ENCODE measurements at regions of chr1 and their contacts with region 1.

Region 1: GRCh38 chr1:47192458-47193384 is 2.9 kb upstream of the PDZK1IP1 start:
- DNase-seq: peak; percentile 24 to 77 (median 62)
- ATAC-seq: peak; percentile 62
- H3K4me3 ChIP-seq: no peak overlapping the region
- H3K4me3 Mint-ChIP-seq: no peak overlapping the region
- H3K27ac ChIP-seq: no peak overlapping the region
- H3K27ac Mint-ChIP-seq: no peak overlapping the region
- H3K4me1 ChIP-seq: no peaks in the 10 kb centered on the region
- H3K4me1 Mint-ChIP-seq: peaks cover 4% of the 10 kb centered on the region
- H3K27me3 ChIP-seq: no peaks in the 10 kb centered on the region
- H3K27me3 Mint-ChIP-seq: peaks cover 7% of the 10 kb centered on the region
- CTCF ChIP-seq: peak; percentile 95

Region 2: DNA sequence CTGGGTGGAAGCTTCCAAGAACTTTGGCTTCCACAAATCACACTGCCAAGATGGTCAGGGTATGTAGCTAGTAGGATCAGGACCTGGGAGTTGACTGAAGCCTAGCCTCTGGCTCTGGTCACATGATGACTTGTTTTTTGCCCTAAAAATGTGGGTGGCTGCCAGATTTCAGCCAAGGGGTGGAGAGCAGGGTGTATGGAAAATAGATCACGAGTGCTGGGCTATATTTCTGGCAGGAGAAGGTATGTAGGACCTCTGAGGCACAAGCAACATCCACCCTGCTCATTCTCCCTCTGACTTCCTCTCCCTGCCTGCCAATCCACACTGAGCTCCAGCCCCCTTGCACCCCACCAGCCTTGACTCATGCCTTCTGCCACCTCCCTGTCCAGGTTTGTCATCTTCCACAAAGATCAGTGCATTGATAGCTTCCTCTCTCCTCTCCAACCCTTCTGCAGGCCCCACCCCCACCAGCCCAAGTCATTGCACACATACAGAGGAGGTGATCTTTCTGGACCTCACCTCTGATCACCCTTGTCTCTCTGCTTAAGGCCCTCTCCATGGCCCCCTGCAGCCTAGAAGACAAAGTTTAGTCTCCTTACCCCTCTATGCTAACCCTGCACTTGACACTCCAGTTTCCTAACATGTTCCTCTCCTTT is 402.1 kb before region 1 on chr1:
- CTCF ChIA-PET with region 1: no interaction called
- POLR2A ChIA-PET with region 1: no interaction called
- intact Hi-C with region 1: no loop called
- DNase-seq: no peak
- ATAC-seq: no peak
- H3K4me3 ChIP-seq: no peak overlapping the region
- H3K4me3 Mint-ChIP-seq: no peak overlapping the region
- H3K27ac ChIP-seq: no peak overlapping the region
- H3K27ac Mint-ChIP-seq: no peak overlapping the region
- H3K4me1 ChIP-seq: no peaks in the 10 kb centered on the region
- H3K4me1 Mint-ChIP-seq: no peaks in the 10 kb centered on the region
- H3K27me3 ChIP-seq: peaks cover 0 to 3% of the 10 kb centered on the region in 2 experiments
- H3K27me3 Mint-ChIP-seq: peaks cover 25% of the 10 kb centered on the region
- CTCF ChIP-seq: no peak

Region 3: GRCh38 chr1:47179017-47179987 is 13.4 kb before region 1 on chr1:
- CTCF ChIA-PET with region 1: interaction called, 35 read pairs
- POLR2A ChIA-PET with region 1: no interaction called
- intact Hi-C with region 1: no loop called
- DNase-seq: peak; percentile 33 to 75 (median 59)
- ATAC-seq: peak; percentile 69
- H3K4me3 ChIP-seq: peak overlapping the region; percentile 18 to 34
- H3K4me3 Mint-ChIP-seq: peak overlapping the region; percentile 72
- H3K27ac ChIP-seq: no peak overlapping the region
- H3K27ac Mint-ChIP-seq: no peak overlapping the region
- H3K4me1 ChIP-seq: peaks cover 7% of the 10 kb centered on the region
- H3K4me1 Mint-ChIP-seq: peaks cover 14% of the 10 kb centered on the region
- H3K27me3 ChIP-seq: peaks cover 0 to 10% of the 10 kb centered on the region in 2 experiments
- H3K27me3 Mint-ChIP-seq: peaks cover 33% of the 10 kb centered on the region
- CTCF ChIP-seq: peak; percentile 79

Region 4: GRCh38 chr1:47219590-47220220 is 27.0 kb after region 1 on chr1:
- CTCF ChIA-PET with region 1: interaction called, 10 read pairs
- POLR2A ChIA-PET with region 1: no interaction called
- intact Hi-C with region 1: no loop called
- DNase-seq: no peak
- ATAC-seq: no peak
- H3K4me3 ChIP-seq: no peak overlapping the region
- H3K4me3 Mint-ChIP-seq: no peak overlapping the region
- H3K27ac ChIP-seq: no peak overlapping the region
- H3K27ac Mint-ChIP-seq: no peak overlapping the region
- H3K4me1 ChIP-seq: no peaks in the 10 kb centered on the region
- H3K4me1 Mint-ChIP-seq: no peaks in the 10 kb centered on the region
- H3K27me3 ChIP-seq: peaks cover 0 to 8% of the 10 kb centered on the region in 2 experiments
- H3K27me3 Mint-ChIP-seq: peaks cover 16% of the 10 kb centered on the region
- CTCF ChIP-seq: no peak

Region 5: GRCh38 chr1:47424336-47424982 is 231.7 kb after region 1 on chr1:
- CTCF ChIA-PET with region 1: interaction called, 5 read pairs
- POLR2A ChIA-PET with region 1: no interaction called
- intact Hi-C with region 1: loop called in 1 of 2 experiments (anchors 10 kb)
- DNase-seq: peak in 1 of 9 experiments; percentile 26
- ATAC-seq: no peak
- H3K4me3 ChIP-seq: no peak overlapping the region
- H3K4me3 Mint-ChIP-seq: no peak overlapping the region
- H3K27ac ChIP-seq: no peak overlapping the region
- H3K27ac Mint-ChIP-seq: no peak overlapping the region
- H3K4me1 ChIP-seq: no peaks in the 10 kb centered on the region
- H3K4me1 Mint-ChIP-seq: peaks cover 2% of the 10 kb centered on the region
- H3K27me3 ChIP-seq: peaks cover 0 to 10% of the 10 kb centered on the region in 2 experiments
- H3K27me3 Mint-ChIP-seq: peaks cover 28% of the 10 kb centered on the region
- CTCF ChIP-seq: peak; percentile 26

Region 6: GRCh38 chr1:47725992-47726855 is 533.5 kb after region 1 on chr1:
- CTCF ChIA-PET with region 1: interaction called, 6 read pairs
- POLR2A ChIA-PET with region 1: no interaction called
- intact Hi-C with region 1: loop called (anchors 1 to 5 kb)
- DNase-seq: peak; percentile 24 to 71 (median 59)
- ATAC-seq: peak; percentile 71
- H3K4me3 ChIP-seq: no peak overlapping the region
- H3K4me3 Mint-ChIP-seq: peak overlapping the region; percentile 62
- H3K27ac ChIP-seq: no peak overlapping the region
- H3K27ac Mint-ChIP-seq: no peak overlapping the region
- H3K4me1 ChIP-seq: no peaks in the 10 kb centered on the region
- H3K4me1 Mint-ChIP-seq: peaks cover 11% of the 10 kb centered on the region
- H3K27me3 ChIP-seq: peaks cover 2 to 4% of the 10 kb centered on the region in 2 experiments
- H3K27me3 Mint-ChIP-seq: peaks cover 31% of the 10 kb centered on the region
- CTCF ChIP-seq: peak; percentile 71

Measured in CD8-positive, alpha-beta T cell (primary cell).